IMR-90 (cell line): ENCODE measurements at regions of chr2 and their contacts with region 1.

Region 1: DNA sequence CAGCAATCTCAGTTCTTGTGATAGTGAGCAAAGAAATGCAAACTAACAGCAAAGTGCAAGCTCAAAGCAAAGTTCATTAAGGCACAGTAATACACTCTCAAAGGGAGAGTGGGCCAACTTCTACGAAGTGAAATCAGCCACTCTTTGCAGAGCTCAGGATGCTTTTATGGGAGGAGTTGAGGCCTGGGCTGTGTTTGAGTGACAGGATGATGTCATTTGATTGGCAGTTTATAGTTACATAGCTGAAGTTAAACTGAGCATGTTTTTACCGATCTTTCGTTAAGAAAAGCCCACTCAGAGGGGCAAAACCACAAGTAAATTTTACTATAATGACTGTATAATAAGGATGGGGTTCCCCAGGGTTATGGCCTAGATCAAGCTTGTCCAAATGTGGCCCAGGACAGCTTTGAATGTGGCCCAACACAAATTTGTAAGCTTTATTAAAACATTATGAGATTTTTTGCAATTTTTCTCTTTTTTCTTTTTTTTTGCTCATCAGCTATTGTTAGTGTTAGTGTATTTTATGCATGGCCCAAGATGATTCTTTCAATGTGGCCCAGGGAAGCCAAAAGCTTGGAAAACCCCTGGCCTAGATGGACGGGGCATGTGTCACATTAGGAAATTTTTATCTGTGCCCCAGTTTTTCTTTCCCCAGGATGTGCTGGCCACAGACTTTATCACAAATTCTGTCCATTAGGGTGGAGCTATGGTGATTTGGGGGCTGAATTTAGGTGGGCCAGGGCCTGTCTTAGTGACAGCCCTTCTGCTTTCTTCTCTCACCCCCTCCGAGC is 8.3 kb upstream of the DNAH7 start:
- DNase-seq: no peak
- ATAC-seq: no peak
- H3K4me3 ChIP-seq: no peak overlapping the region
- H3K27ac ChIP-seq: peak overlapping the region; percentile 5; the same call in 1 of the 2 replicates
- H3K4me1 ChIP-seq: peaks cover 6% of the 10 kb centered on the region
- H3K27me3 ChIP-seq: no peaks in the 10 kb centered on the region
- CTCF ChIP-seq: no peak
- POLR2A ChIP-seq: no peak
- RAD21 ChIP-seq: no peak

Region 2: DNA sequence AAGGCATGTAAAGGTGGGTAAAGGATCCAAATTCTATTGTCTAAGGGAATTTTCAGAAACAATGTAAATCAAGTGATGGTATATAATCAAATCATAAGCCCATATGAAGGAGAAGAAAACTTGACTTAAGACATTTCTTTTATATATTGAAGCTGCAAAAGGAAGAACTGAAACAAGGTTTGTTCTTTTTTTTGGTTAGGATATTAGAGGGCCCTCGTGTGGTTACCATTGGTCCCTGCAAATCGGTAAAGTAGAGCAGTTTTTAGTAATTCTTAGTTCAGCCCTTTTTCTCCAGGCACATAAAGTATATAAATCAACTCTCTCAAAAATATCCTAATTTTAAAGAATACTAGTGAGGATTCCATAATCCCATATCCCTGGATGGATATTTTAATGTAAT is 200.0 kb after region 1 on chr2:
- CTCF ChIA-PET with region 1: interaction called, 10 read pairs
- POLR2A ChIA-PET with region 1: no interaction called
- dilution Hi-C with region 1: no loop called
- in situ Hi-C with region 1: no loop called
- intact Hi-C with region 1: loop called (anchors 1 kb)
- DNase-seq: peak; percentile 64
- ATAC-seq: no peak
- H3K4me3 ChIP-seq: no peak overlapping the region
- H3K27ac ChIP-seq: no peak overlapping the region
- H3K4me1 ChIP-seq: peaks cover 21% of the 10 kb centered on the region
- H3K27me3 ChIP-seq: no peaks in the 10 kb centered on the region
- CTCF ChIP-seq: peak; percentile 69
- POLR2A ChIP-seq: no peak
- RAD21 ChIP-seq: peak; percentile 68

Region 3: GRCh38 chr2:196453613-196454047 is 376.7 kb after region 1 on chr2:
- CTCF ChIA-PET with region 1: interaction called, 6 read pairs
- POLR2A ChIA-PET with region 1: no interaction called
- dilution Hi-C with region 1: no loop called
- in situ Hi-C with region 1: loop called (anchors 25 kb)
- intact Hi-C with region 1: loop called (anchors 1 kb)
- DNase-seq: peak; percentile 63
- ATAC-seq: peak; percentile 73; the same call in 1 of the 2 replicates
- H3K4me3 ChIP-seq: no peak overlapping the region
- H3K27ac ChIP-seq: no peak overlapping the region
- H3K4me1 ChIP-seq: no peaks in the 10 kb centered on the region
- H3K27me3 ChIP-seq: no peaks in the 10 kb centered on the region
- CTCF ChIP-seq: peak; percentile 69
- POLR2A ChIP-seq: no peak
- RAD21 ChIP-seq: peak; percentile 73

Region 4: DNA sequence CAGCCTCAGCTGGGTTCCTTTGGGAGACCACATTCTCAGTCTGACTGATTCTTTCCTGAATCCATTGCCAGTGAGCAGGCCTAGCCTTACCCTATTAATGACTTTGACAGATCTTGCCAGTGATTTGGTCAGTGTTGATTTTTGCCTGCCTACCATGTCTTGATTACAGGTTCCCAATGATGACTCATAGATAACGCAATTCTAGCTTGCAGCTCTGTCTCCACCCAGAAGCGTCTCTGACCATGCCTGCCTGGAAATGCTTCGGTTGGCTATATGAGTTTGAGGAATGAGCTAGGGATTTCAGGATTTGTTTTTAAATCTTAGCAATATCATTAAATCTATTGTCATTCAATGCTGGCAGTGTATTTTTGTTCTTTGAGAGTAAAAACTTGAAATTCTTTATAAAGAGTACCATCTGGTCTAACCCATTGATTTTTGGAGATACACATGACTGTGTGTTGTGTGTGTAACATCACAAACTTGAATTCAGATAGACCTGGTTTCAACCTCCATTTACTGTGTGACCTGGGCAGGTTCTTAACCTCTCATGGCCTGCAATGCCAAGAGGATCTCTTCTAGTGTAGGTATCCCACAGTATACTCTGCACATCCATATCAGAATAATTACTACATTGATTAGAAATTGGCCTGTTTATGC is 619.6 kb after region 1 on chr2:
- CTCF ChIA-PET with region 1: no interaction called
- POLR2A ChIA-PET with region 1: no interaction called
- dilution Hi-C with region 1: no loop called
- in situ Hi-C with region 1: no loop called
- intact Hi-C with region 1: no loop called
- DNase-seq: peak; percentile 84
- ATAC-seq: peak; percentile 96
- H3K4me3 ChIP-seq: no peak overlapping the region
- H3K27ac ChIP-seq: no peak overlapping the region
- H3K4me1 ChIP-seq: no peaks in the 10 kb centered on the region
- H3K27me3 ChIP-seq: no peaks in the 10 kb centered on the region
- CTCF ChIP-seq: no peak
- POLR2A ChIP-seq: no peak
- RAD21 ChIP-seq: no peak

Region 5: DNA sequence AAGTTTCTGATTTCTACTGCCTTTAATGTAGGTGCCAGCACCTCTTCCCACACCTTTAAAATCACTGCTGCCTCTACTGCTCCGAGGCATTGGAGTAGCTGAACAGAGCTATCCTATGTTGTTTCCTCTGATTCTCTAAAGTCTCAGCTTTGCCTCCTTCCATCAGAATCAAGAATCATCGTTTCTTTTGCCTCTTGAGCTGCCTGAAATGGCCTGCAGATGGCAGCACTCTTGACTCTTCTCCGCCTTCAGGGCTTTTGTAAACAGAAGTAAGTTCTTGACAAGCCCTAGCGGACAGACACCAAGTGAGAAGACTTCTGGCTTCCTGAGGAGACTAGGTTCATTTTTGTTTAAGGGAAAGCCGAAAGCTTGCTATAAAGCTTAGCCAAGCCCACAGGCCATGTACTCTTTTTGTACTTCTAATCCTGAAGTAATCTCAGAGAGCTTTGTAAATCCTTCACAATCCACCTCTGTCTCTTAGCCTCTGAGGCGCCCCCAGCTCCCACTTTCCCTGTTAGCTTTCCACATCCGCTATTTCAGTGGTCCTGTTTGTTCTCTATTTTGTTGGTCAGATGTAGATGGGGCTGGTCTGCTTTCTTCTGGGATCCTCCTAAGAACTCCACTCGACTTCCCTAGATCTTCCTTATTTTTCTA is 674.1 kb after region 1 on chr2:
- CTCF ChIA-PET with region 1: interaction called, 6 read pairs
- POLR2A ChIA-PET with region 1: no interaction called
- dilution Hi-C with region 1: no loop called
- in situ Hi-C with region 1: loop called (anchors 10 kb)
- intact Hi-C with region 1: no loop called
- DNase-seq: peak; percentile 61
- ATAC-seq: peak; percentile 84
- H3K4me3 ChIP-seq: no peak overlapping the region
- H3K27ac ChIP-seq: no peak overlapping the region
- H3K4me1 ChIP-seq: no peaks in the 10 kb centered on the region
- H3K27me3 ChIP-seq: no peaks in the 10 kb centered on the region
- CTCF ChIP-seq: peak; percentile 65
- POLR2A ChIP-seq: no peak
- RAD21 ChIP-seq: peak; percentile 42